GM10248 (cell line): ENCODE measurements at regions of chr7 and their contacts with region 1.

Region 1: DNA sequence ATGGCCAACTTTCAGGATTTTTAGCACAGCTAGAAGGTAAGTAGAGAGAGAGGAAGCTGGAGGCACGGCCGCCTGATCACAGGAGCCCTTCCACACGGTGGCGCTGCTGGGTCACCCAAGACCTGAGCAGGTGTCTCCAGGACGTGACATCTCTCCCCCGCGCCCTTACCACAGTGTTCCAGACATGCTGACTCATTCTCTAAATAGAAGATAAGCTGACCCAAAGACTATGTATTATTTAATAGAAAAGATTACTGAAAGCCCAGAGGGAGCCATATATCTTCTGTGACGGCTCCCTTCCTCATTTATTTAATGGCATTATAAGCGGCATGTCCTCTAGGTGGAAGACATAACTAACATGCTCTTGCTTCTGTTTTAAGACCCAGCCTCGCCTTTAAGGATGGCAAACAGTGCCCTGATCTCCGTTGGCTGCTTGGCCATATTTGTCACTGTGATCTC is 26.0 kb upstream of the MALSU1 start:
- DNase-seq: peak; percentile 85
- CTCF ChIP-seq: peak; percentile 93

Region 2: DNA sequence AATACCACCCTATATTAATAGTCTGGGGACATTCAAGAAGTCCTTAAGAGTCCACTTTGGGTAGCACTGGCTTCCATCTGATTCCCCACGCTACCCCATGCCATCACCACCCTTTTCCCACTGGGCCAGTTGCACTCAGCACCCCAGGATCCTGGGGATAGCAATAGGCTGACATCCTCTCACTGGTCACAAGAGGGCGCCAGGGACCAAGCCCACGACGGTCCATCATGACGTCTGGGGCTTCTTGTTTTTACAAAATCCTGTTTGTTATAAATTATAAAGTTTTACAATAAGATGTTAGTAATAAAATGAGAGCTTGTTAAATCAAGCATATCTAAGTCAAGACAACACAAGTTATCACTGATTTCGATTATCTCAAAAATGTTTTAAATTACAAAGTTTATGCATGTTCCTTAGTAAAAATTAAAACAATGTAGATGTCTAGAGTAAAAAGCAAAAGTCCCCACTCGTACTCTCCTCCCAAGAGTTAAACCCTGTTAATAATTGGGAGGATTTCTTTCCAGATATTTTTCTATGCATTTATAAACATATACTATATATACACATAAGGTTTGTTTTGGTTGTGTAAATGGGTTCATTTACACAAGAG is 11.2 kb before region 1 on chr7:
- CTCF ChIA-PET with region 1: interaction called, 135 read pairs
- POLR2A ChIA-PET with region 1: no interaction called
- DNase-seq: peak; percentile 82
- CTCF ChIP-seq: peak; percentile 88

Region 3: GRCh38 chr7:23298885-23299769 is 26.0 kb after region 1 on chr7 and contains the start of gene MALSU1:
- CTCF ChIA-PET with region 1: interaction called, 132 read pairs
- POLR2A ChIA-PET with region 1: no interaction called
- DNase-seq: peak; percentile 96
- CTCF ChIP-seq: no peak

Region 4: DNA sequence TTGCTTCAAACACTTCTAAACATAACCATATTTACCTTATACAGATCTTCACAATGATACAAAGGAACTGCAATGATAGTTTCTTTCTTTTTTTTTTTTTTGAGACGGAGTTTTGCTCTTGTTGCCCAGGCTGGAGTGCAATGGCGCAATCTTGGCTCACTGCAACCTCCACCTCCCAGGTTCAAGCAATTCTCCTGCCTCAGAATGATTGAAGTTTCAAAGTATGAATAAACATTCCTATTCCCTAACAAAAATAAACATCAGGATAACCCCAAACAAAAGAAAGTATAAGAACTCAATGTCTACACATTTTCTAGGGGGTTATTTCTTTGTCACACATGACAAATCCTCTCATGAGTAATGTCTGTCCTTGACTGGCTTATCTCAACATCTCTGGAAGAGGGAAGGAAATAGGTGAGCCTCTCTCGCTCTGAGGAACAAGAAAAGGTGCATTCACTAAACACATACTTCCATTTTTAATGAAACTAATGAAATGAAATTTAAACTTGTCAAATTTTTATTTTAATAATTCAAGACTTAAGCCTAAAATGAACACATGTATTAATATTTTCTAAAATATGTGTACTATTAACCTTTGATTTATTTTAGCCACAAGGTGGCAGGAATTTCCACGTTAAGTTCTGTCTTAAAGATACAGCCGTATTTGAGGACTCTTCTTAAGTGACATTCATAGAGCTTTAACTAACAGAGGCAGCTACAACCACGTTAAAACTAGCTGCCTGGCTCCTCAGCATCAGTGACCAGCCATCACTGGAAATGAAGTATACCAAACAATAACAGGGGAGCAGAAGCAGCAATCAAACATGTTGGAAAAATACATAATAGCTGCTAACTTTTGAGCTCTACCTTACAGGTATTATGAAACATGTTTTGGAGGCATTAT is 84.3 kb after region 1 on chr7:
- CTCF ChIA-PET with region 1: interaction called, 14 read pairs
- POLR2A ChIA-PET with region 1: no interaction called
- DNase-seq: peak; percentile 36
- CTCF ChIP-seq: peak; percentile 47

Region 5: GRCh38 chr7:23523486-23524075 is 250.4 kb after region 1 on chr7:
- CTCF ChIA-PET with region 1: interaction called, 10 read pairs
- POLR2A ChIA-PET with region 1: no interaction called
- DNase-seq: no peak
- CTCF ChIP-seq: no peak

Region 6: DNA sequence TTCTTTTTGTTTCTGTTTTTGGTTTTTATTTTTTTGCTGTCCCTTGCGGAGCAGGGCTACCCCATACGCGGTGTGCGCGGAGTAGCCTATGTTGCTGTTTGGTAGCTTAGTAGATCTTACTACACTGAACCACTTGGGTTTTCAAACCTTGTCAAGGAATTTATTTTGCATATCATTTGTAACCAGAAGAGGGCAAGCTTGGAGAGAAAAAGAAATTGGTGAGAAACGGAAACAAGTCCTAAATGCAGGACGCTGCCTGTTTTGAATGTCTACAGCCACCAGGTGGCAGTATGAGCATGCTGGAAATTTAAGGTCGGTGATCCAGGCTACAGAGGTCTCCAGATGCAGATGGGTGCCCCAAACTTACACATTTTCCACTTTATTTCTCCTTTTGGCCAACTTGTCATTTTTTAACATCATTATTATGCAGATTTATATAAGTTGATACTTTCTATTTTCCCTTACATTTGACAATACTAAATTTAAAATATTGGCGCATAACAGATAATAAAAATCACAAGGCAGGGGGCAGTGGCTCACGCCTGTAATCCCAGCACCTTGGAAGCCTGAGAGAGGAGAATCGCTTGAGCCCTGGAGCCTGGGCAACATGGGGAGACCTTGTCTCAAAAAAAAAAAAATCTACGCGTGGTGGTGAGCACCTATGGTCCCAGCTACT is 273.9 kb after region 1 on chr7:
- CTCF ChIA-PET with region 1: interaction called, 93 read pairs
- POLR2A ChIA-PET with region 1: no interaction called
- DNase-seq: peak; percentile 82
- CTCF ChIP-seq: peak; percentile 91